Endothelial cell of umbilical vein (primary cell): ENCODE measurements at regions of chr21 and their contacts with region 1.

Region 1: GRCh38 chr21:33491373-33492102 is at the start of gene DNAJC28:
- DNase-seq: peak; percentile 96
- H3K4me3 ChIP-seq: peak within 1 kb of the TSS; percentile 45 to 73 (median 57)
- H3K27ac ChIP-seq: peak within 1 kb of the TSS; percentile 49
- H3K4me1 ChIP-seq: peaks cover 4% of the 10 kb centered on the region
- H3K27me3 ChIP-seq: peaks cover 0 to 2% of the 10 kb centered on the region in 2 experiments
- CTCF ChIP-seq: no peak
- POLR2A ChIP-seq: peak; percentile 58
- total RNA-seq, gene DNAJC28: 0.82 and 1.0 TPM in 2 replicates

Region 2: GRCh38 chr21:33380483-33380998 is 111.0 kb before region 1 on chr21:
- CTCF ChIA-PET with region 1: no interaction called
- POLR2A ChIA-PET with region 1: no interaction called
- dilution Hi-C with region 1: no loop called
- intact Hi-C with region 1: no loop called
- DNase-seq: peak; percentile 93
- H3K4me3 ChIP-seq: no peak overlapping the region
- H3K27ac ChIP-seq: peak overlapping the region; percentile 93
- H3K4me1 ChIP-seq: peaks cover 34% of the 10 kb centered on the region
- H3K27me3 ChIP-seq: no peaks in the 10 kb centered on the region
- CTCF ChIP-seq: no peak
- POLR2A ChIP-seq: peak; percentile 56

Region 3: DNA sequence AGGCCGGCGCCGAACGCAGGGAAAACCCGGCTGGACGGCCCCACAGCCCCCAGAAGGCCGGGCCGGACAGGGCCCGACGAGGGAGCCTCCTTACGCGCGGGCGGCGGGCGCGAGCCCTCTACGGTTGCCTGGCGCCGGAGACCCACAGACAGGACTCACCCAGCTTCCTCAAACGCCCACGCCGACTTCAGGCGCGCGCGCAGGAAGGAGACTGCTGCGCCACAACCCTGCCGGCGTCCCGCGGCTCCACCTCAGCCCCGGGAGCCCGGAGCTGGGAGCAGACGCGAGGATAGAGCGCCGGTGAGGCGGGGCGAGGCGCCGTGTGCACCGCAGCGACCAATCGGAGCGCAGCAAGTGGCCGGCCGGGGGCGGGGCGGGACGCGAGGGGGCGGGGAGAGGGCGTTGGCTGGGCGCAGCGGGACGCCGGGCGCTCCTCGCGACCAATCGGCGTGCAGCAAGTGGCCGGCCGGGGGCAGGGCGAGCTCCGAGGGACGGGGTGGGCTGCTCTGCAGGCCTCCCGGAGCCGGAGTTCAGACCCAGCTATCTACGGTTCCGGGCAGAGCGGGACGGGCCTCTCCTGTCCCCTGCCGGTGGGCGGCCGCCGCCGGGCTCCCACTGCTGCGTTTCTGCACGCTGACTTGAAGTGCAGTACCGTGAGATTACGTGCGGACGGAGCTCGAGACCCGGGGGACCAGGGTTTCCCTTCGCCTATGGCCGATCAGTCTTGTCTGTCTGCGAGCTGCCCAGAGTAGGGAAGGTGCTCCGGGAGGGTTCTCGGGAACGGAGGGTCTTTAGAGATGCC is 11.7 kb before region 1 on chr21 and contains the start of gene TMEM50B:
- CTCF ChIA-PET with region 1: interaction called, 24 read pairs
- POLR2A ChIA-PET with region 1: interaction called, 22 read pairs
- dilution Hi-C with region 1: no loop called
- intact Hi-C with region 1: loop called (anchors 1 kb)
- DNase-seq: peak; percentile 98
- H3K4me3 ChIP-seq: peak within 1 kb of the TSS; percentile 83 to 95 (median 91)
- H3K27ac ChIP-seq: peak within 1 kb of the TSS; percentile 72
- H3K4me1 ChIP-seq: peaks cover 4% of the 10 kb centered on the region
- H3K27me3 ChIP-seq: peaks cover 3% of the 10 kb centered on the region in 2 experiments
- CTCF ChIP-seq: peak; percentile 27 to 59
- POLR2A ChIP-seq: peak; percentile 94
- total RNA-seq, gene TMEM50B: 29.3 and 29.7 TPM in 2 replicates